GM12878 (cell line): ENCODE measurements at regions of chr11 and their contacts with region 1.

Region 1: GRCh38 chr11:121292495-121293287 is at the start of gene SC5D:
- DNase-seq: peak; percentile 80
- ATAC-seq: peak; percentile 98
- H3K4me3 ChIP-seq: peak within 1 kb of the TSS; percentile 88
- H3K27ac ChIP-seq: peak within 1 kb of the TSS; percentile 88
- H3K4me1 ChIP-seq: no peaks in the 10 kb centered on the region
- H3K27me3 ChIP-seq: no peaks in the 10 kb centered on the region
- CTCF ChIP-seq: no peak
- EP300 ChIP-seq: peak in 1 of 2 experiments; percentile 5; a peak in 2 of 4 replicates
- POLR2A ChIP-seq: peak; percentile 96
- RAD21 ChIP-seq: no peak
- polyA plus RNA-seq, gene SC5D: 26.5 to 31.7 TPM

Region 2: GRCh38 chr11:121023848-121024751 is 268.6 kb before region 1 on chr11 and contains the start of gene TBCEL:
- CTCF ChIA-PET with region 1: no interaction called
- POLR2A ChIA-PET with region 1: no interaction called
- RAD21 ChIA-PET with region 1: no interaction called
- SMC1A ChIA-PET with region 1: no interaction called
- in situ Hi-C with region 1: no loop called
- intact Hi-C with region 1: loop called (anchors 10 kb)
- DNase-seq: peak; percentile 54
- ATAC-seq: peak; percentile 97
- H3K4me3 ChIP-seq: peak within 1 kb of the TSS; percentile 81
- H3K27ac ChIP-seq: peak within 1 kb of the TSS; percentile 71
- H3K4me1 ChIP-seq: no peaks in the 10 kb centered on the region
- H3K27me3 ChIP-seq: no peaks in the 10 kb centered on the region
- CTCF ChIP-seq: no peak
- EP300 ChIP-seq: 0 out of 4 replicates have a peak, but pooled peaks of 1 of the 2 experiments have one; percentile 36
- POLR2A ChIP-seq: peak; percentile 75
- RAD21 ChIP-seq: no peak
- polyA plus RNA-seq, gene TBCEL: 2.0 to 2.3 TPM

Region 3: DNA sequence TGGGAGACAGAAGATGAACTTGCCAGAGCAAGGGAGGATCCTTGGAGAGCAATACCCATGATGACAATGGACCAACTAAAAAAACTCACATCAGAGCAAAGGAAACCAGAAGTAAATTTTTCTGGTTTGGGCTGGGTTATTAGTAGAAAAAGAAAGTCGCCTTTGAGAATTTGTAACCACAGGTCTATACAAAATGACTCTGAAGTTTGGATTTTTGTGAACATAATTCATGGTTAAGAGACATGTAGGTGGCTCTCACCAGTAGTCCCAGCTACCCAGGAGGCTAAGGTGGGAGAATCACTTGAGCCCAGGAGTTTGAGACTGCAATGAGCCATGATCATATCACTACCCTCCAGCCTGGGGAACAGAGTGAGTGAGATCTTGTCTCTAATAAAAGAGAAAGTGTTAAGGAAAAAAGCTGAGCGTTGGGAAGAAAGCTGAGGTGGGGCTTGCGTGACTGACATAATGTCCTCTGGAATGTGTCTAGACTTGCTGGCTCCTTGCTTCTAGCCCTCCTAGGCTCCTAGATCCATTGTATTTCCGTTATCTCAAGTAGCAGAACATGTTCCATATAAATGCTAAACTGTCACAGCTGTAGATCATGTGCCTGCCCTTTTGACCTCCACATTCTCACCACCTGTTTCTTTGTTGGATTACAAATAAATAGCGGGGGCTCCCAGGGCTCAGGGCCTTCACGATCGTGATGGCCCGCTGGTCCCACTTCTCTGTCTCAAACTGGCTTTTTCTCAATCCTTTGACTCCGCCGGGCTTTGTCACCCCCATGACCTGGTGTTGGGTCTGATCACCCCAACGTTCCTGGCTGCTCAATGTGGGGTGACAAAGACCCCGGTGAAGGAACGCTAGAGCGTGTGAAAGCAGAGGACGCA is 56.3 kb before region 1 on chr11:
- CTCF ChIA-PET with region 1: interaction called, 8 read pairs
- POLR2A ChIA-PET with region 1: interaction called, 7 read pairs
- RAD21 ChIA-PET with region 1: interaction called, 9 read pairs
- SMC1A ChIA-PET with region 1: interaction called, 15 read pairs
- in situ Hi-C with region 1: no loop called
- intact Hi-C with region 1: loop called (anchors 1 kb)
- DNase-seq: peak; percentile 74
- ATAC-seq: peak; percentile 85
- H3K4me3 ChIP-seq: peak overlapping the region; percentile 57
- H3K27ac ChIP-seq: peak overlapping the region; percentile 95
- H3K4me1 ChIP-seq: peaks cover 32% of the 10 kb centered on the region
- H3K27me3 ChIP-seq: no peaks in the 10 kb centered on the region
- CTCF ChIP-seq: no peak
- EP300 ChIP-seq: no peak; a peak in 1 of 4 replicates
- POLR2A ChIP-seq: no peak
- RAD21 ChIP-seq: no peak

Region 4: GRCh38 chr11:123062158-123062891 is 1769.6 kb after region 1 on chr11:
- CTCF ChIA-PET with region 1: no interaction called
- POLR2A ChIA-PET with region 1: no interaction called
- RAD21 ChIA-PET with region 1: no interaction called
- SMC1A ChIA-PET with region 1: no interaction called
- in situ Hi-C with region 1: no loop called
- intact Hi-C with region 1: loop called (anchors 5 kb)
- DNase-seq: peak; percentile 97
- ATAC-seq: peak; percentile 90
- H3K4me3 ChIP-seq: peak overlapping the region; percentile 73
- H3K27ac ChIP-seq: peak overlapping the region; percentile 100
- H3K4me1 ChIP-seq: peaks cover 14% of the 10 kb centered on the region; the same call in 1 of the 2 replicates
- H3K27me3 ChIP-seq: no peaks in the 10 kb centered on the region
- CTCF ChIP-seq: no peak
- EP300 ChIP-seq: no peak
- POLR2A ChIP-seq: no peak; the same call in none of the 2 replicates
- RAD21 ChIP-seq: no peak